AG04449 (cell line): ENCODE measurements at regions of chr18 and their contacts with region 1.

Region 1: DNA sequence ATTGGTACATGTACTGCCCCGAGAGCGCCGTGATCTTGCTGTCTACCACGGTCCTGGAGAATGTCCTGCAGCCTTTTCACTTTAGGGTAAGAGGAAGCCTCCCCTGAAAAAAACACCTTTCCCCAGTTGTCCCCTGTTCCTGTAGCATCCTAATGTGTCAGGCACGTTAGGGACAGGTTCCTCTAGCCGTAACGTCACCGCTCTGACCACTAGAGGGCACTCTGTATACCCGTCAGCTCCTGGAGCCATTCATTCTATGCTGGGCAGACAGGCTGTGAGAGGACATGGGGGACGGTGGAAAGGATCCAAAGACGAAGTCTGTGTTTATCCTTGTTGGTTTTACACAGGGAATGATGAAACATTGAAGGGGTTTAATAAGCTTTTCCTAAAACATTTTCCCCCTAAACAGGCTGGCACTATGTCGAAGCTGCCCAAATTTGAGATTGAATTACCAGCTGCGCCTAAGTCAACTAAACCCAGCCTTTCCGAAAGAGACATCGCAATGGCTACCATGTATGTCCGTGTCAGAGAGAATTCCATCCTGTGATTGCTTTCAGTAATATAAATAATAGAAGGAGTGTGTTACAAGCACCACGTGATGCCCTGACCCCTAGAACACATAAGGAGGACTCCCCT is 12.7 kb downstream of the RMC1 start:
- DNase-seq: no peak
- H3K4me3 ChIP-seq: no peak overlapping the region
- CTCF ChIP-seq: peak; percentile 93

Region 2: DNA sequence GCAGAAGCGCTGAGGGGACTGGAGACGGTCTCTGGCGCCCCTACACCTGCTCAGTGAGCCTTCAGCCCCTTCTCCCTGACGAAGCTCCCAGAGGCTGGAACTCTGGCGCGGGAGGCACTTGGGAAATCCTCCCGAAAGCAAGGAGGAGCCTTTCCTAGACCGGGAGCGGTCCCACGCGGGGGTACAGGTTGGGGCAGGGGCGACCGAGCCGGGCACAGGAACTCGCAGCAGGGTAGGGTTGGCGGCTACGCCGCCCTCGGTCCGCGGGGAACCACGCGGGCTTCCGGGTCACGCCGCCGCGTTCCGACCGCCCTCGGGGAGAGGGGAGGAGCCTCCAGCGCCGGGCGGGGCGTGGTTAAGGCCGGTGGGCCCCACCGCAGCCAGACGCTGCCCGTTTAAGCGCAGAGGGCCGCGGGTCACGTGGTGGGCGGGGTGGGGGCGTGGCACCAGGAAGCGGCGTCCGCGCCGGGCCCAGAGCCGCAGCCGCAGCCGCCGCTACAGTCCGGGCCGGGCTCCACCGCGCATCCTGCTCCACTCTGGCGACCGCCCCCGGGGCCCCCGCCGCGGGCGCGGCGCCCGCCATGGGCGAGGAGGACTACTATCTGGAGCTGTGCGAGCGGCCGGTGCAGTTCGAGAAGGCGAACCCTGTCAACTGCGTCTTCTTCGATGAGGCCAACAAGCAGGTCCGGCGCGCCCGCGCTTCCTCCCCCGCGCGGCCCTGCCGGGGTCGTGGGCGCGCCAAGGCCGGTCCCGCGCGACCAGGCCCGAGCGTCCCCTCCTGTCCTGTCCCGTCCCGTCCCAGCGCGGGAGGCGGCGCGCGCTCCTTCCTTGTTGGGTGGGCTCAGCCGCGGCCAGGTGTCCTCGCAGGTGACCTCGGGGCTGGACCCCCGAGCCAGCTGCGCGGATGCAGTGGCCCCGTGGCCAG is 12.7 kb before region 1 on chr18 and contains the start of gene RMC1:
- CTCF ChIA-PET with region 1: interaction called, 51 read pairs
- POLR2A ChIA-PET with region 1: no interaction called
- DNase-seq: peak; percentile 45
- H3K4me3 ChIP-seq: peak within 1 kb of the TSS; percentile 83
- CTCF ChIP-seq: no peak

Region 3: GRCh38 chr18:23540867-23541266 is 24.8 kb after region 1 on chr18:
- CTCF ChIA-PET with region 1: interaction called, 16 read pairs
- POLR2A ChIA-PET with region 1: no interaction called
- DNase-seq: no peak
- H3K4me3 ChIP-seq: no peak overlapping the region
- CTCF ChIP-seq: no peak

Region 4: GRCh38 chr18:23578891-23579653 is 63.0 kb after region 1 on chr18:
- CTCF ChIA-PET with region 1: interaction called, 24 read pairs
- POLR2A ChIA-PET with region 1: no interaction called
- DNase-seq: no peak
- H3K4me3 ChIP-seq: no peak overlapping the region
- CTCF ChIP-seq: no peak

Region 5: GRCh38 chr18:23761941-23762340 is 245.9 kb after region 1 on chr18:
- CTCF ChIA-PET with region 1: no interaction called
- POLR2A ChIA-PET with region 1: no interaction called
- DNase-seq: no peak
- H3K4me3 ChIP-seq: no peak overlapping the region
- CTCF ChIP-seq: no peak